ENCODE measurements at regions of chr17 and their contacts with region 1.

Region 1: DNA sequence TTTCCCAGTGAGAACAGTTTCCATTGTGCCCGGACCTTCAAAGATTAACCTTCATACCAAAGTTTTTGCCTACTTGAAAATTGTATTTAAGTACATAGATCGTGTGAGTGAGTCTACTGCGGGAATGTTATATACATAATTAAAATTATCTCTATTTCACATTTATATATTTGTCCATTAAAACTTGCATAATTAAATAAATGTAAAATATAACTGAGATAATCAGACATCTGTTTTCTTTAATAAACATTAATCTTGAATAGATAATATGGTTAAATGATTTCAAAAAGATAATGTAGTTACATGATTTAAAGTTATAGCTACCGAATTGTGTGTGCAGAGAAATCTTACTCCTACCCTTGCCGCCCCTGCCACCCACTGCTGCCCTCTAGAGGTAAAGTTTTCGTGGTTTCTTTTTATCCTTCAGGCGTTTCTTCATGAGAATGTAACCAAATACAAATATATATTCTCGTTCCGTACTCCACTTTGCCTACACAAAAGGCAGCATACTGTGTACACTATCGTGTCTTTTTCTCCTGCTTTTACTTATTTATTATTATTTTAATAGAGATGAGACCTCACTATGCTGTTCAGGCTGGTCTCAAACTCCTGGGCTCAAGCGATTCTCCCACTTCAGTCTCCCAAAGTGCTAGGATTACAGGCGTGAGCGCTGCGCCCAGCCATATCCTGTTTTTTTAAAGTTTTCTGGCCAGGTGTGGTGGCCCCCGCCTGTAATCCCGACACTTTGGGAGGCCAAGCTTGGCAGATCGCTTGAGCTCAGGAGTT is 35.6 kb downstream of the RPA1 start:
- DNase-seq: peak; percentile 35
- H3K4me3 ChIP-seq: no peak overlapping the region
- H3K27ac ChIP-seq: no peak overlapping the region
- H3K4me1 ChIP-seq: no peaks in the 10 kb centered on the region
- H3K27me3 ChIP-seq: no peaks in the 10 kb centered on the region
- CTCF ChIP-seq: peak; percentile 65 to 73

Region 2: DNA sequence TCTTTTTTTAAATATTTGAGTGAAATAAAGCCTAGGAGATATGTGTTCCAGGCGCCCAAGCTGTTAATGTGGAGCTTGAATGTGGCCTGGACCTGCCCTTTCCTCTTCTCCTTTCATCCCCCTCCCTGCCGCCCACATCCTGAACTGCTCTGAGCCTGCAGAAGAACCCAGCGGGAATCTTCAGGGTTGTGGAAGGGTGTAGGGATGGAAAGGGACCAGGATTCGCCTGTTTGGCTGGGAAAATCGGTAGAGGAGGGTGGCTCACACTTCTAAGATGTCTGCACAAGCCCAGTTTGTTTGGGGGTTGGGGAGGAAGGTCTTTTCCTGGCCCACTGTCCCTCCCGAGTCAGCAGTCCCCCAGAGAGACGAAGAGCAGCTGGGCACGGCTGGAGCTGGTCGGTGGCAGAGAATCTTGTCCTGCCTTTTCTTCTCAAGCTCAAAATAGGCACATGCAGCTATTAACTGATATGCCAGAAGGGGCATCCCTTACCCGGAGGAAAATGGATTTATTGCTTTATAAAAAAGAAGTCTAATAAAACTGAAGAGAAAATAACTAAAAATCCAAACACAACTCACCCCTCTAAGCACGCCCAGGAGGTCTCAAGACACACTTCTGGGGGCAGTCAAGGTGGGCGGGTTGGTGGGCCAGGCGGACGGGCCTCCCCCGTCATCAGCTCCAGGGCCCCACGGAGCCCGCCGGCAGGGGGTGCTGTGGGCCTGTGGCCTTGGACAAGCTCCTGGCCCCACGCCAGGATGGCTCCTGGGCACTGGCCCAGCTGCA is 291.3 kb before region 1 on chr17:
- CTCF ChIA-PET with region 1: interaction called, 12 read pairs
- dilution Hi-C with region 1: no loop called
- in situ Hi-C with region 1: no loop called
- intact Hi-C with region 1: no loop called
- DNase-seq: peak; percentile 63
- H3K4me3 ChIP-seq: no peak overlapping the region
- H3K27ac ChIP-seq: no peak overlapping the region
- H3K4me1 ChIP-seq: peaks cover 33% of the 10 kb centered on the region
- H3K27me3 ChIP-seq: no peaks in the 10 kb centered on the region
- CTCF ChIP-seq: peak; percentile 82 to 97

Region 3: GRCh38 chr17:1673041-1673785 is 192.2 kb before region 1 on chr17:
- CTCF ChIA-PET with region 1: no interaction called
- dilution Hi-C with region 1: no loop called
- in situ Hi-C with region 1: no loop called
- intact Hi-C with region 1: loop called (anchors 1 kb)
- DNase-seq: no peak
- H3K4me3 ChIP-seq: no peak overlapping the region
- H3K27ac ChIP-seq: no peak overlapping the region
- H3K4me1 ChIP-seq: no peaks in the 10 kb centered on the region
- H3K27me3 ChIP-seq: no peaks in the 10 kb centered on the region
- CTCF ChIP-seq: no peak

Region 4: GRCh38 chr17:1813088-1813487 is 52.4 kb before region 1 on chr17:
- CTCF ChIA-PET with region 1: interaction called, 10 read pairs
- dilution Hi-C with region 1: no loop called
- in situ Hi-C with region 1: no loop called
- intact Hi-C with region 1: no loop called
- DNase-seq: no peak
- H3K4me3 ChIP-seq: no peak overlapping the region
- H3K27ac ChIP-seq: no peak overlapping the region
- H3K4me1 ChIP-seq: no peaks in the 10 kb centered on the region
- H3K27me3 ChIP-seq: no peaks in the 10 kb centered on the region
- CTCF ChIP-seq: no peak

Region 5: DNA sequence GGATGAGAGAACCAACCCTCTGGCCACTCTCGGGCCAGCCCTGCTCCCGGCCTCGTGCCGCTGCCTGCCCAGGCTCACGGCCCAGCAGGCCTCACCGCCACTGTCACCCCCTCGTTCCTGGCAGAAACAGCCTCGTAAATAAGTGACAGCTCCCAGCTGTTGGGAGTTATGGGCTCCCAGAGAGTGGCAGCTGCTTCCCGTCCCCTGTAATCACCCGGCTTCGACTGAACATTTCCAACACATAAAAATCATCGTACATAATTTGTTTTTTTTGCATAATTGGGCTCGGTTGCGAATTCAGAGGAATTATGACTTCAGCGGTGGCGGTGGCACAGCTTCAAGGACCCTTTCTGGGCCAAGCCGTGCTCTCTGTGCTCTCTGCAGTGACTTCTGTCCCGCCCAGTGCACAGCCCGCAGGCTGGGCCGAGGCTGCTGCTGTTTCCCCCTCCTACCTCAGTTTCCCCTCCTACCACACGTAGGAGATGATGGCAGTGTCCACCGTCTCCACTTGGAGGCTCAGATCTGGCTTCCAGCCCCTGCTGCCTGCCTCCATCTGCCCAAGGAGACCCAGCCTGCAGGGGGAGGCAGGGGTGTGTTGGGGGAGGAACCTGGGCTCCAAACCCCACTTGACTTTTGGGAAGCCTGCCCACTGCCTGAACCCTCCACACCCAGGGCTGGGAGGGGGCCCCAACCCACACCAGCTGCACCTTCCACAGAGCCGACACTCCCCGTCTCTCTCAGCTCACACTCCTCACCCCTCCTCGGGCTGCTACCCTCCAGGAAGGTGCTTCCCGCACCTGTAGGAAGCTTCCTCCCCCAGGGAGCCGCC is 74.8 kb after region 1 on chr17:
- CTCF ChIA-PET with region 1: no interaction called
- dilution Hi-C with region 1: loop called (anchors 5 kb)
- in situ Hi-C with region 1: no loop called
- intact Hi-C with region 1: no loop called
- DNase-seq: no peak
- H3K4me3 ChIP-seq: no peak overlapping the region
- H3K27ac ChIP-seq: no peak overlapping the region
- H3K4me1 ChIP-seq: no peaks in the 10 kb centered on the region
- H3K27me3 ChIP-seq: no peaks in the 10 kb centered on the region
- CTCF ChIP-seq: no peak

Region 6: DNA sequence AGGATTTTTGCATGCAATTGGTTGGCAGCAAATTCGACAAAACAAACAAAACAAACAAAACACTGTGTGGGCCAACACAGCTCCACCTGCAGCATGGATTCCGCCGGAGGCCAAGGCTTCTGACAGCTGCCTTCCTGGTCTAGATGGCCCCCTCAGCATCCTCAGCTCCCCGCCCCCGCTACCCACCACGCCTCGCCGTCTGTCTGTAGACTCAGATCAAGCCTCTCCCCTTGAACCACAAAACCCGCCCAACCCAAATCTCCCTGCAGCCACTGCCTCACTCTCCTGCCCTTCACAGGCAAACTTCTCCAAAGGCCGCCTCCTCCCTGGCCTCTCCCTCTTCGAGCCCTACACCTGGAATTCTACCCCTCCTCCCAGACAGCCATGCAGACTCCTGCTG is 101.8 kb after region 1 on chr17:
- CTCF ChIA-PET with region 1: no interaction called
- dilution Hi-C with region 1: no loop called
- in situ Hi-C with region 1: no loop called
- intact Hi-C with region 1: no loop called
- DNase-seq: no peak
- H3K4me3 ChIP-seq: no peak overlapping the region
- H3K27ac ChIP-seq: no peak overlapping the region
- H3K4me1 ChIP-seq: no peaks in the 10 kb centered on the region
- H3K27me3 ChIP-seq: no peaks in the 10 kb centered on the region
- CTCF ChIP-seq: no peak